Activated naive CD4-positive, alpha-beta T cell treated with anti-CD3 and anti-CD28 coated beads for 36 hours (primary cell): ENCODE measurements at regions of chr2 and their contacts with region 1.

Region 1: GRCh38 chr2:8303322-8303832 is 378.5 kb upstream of the ID2 start:
- DNase-seq: peak; percentile 69
- H3K4me3 Mint-ChIP-seq: no peak overlapping the region
- H3K27ac Mint-ChIP-seq: no peak overlapping the region
- H3K4me1 Mint-ChIP-seq: peaks cover 39% of the 10 kb centered on the region
- H3K27me3 Mint-ChIP-seq: peaks cover 5% of the 10 kb centered on the region

Region 2: GRCh38 chr2:7984693-7985353 is 318.6 kb before region 1 on chr2:
- CTCF ChIA-PET with region 1: no interaction called
- intact Hi-C with region 1: loop called (anchors 10 kb)
- DNase-seq: peak; percentile 22
- H3K4me3 Mint-ChIP-seq: peak overlapping the region; percentile 8
- H3K27ac Mint-ChIP-seq: peak overlapping the region; percentile 62
- H3K4me1 Mint-ChIP-seq: peaks cover 20% of the 10 kb centered on the region
- H3K27me3 Mint-ChIP-seq: peaks cover 4% of the 10 kb centered on the region

Region 3: DNA sequence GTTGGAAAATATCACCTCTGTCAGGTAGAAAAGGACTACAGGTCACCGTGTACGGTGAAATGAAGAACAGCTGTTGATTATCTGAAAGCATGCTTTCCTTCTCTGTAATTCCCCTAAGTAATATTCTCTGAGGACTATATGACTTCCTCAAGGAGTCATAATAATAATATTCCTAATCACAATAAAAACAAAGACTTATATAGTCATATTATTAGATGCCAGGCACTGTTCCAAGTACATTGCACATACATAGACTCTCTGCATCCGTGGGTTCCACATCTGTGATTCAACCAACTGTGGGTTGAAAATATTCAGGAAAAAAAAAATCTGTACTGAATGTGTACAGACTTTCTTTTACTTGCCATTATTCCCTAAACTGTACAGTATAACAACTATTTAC is 133.9 kb before region 1 on chr2:
- CTCF ChIA-PET with region 1: no interaction called
- intact Hi-C with region 1: loop called (anchors 5 kb)
- DNase-seq: no peak
- H3K4me3 Mint-ChIP-seq: no peak overlapping the region
- H3K27ac Mint-ChIP-seq: no peak overlapping the region
- H3K4me1 Mint-ChIP-seq: peaks cover 10% of the 10 kb centered on the region
- H3K27me3 Mint-ChIP-seq: peaks cover 1% of the 10 kb centered on the region

Region 4: GRCh38 chr2:8337321-8337720 is 33.9 kb after region 1 on chr2:
- CTCF ChIA-PET with region 1: interaction called, 3 read pairs
- intact Hi-C with region 1: loop called (anchors 1 kb)
- DNase-seq: peak; percentile 56
- H3K4me3 Mint-ChIP-seq: no peak overlapping the region
- H3K27ac Mint-ChIP-seq: peak overlapping the region; percentile 14
- H3K4me1 Mint-ChIP-seq: peaks cover 15% of the 10 kb centered on the region
- H3K27me3 Mint-ChIP-seq: no peaks in the 10 kb centered on the region